Naive thymus-derived CD4-positive, alpha-beta T cell (primary cell): ENCODE measurements at regions of chr3 and their contacts with region 1.

Region 1: DNA sequence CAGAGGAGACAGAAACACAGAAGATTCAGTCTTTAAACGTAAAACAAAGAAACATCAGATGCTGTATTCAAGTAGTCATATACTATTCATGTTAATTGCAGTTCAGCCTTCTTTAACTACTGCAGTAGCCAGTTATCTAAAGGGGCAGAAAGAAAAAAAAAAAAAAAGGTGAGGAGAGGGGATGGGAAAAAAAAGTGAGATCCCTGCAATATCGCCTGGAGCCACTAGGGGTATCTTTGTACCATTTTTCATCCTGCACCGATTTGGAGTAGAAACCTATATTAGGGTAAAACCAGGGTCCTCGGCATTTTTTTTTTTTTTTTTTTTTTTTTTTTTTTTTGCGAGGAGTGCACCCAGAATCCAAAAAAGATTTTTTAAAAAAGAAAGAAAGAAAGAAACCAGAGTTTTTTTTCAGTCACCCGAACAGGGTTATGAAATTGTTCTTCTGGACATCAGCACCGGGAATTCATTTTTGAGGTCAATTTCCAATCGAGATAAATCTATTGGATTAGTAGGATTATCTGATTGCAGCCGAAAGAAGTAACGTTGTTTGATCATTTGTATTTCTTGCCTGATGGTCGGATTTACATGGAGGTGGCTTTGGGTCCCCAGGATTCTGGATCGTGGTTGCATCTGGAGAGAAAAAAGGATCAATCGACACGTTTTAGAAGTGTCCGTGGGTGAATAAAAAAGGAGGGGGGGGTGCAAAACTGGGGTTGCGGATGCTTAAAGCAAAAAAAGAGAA is 186.7 kb downstream of the NLGN1 start:
- DNase-seq: no peak
- ATAC-seq: no peak
- H3K4me3 ChIP-seq: no peak overlapping the region
- H3K4me3 Mint-ChIP-seq: peak overlapping the region in 4 of 10 donors; percentile 8 to 48 (median 20)
- H3K27ac ChIP-seq: no peak overlapping the region
- H3K27ac Mint-ChIP-seq: no peak overlapping the region
- H3K4me1 ChIP-seq: no peaks in the 10 kb centered on the region
- H3K4me1 Mint-ChIP-seq: peaks cover 6 to 14% (median 9%) of the 10 kb centered on the region in 7 donors
- H3K27me3 ChIP-seq: no peaks in the 10 kb centered on the region
- H3K27me3 Mint-ChIP-seq: peaks cover 29 to 31% (median 31%) of the 10 kb centered on the region in 5 donors

Region 2: DNA sequence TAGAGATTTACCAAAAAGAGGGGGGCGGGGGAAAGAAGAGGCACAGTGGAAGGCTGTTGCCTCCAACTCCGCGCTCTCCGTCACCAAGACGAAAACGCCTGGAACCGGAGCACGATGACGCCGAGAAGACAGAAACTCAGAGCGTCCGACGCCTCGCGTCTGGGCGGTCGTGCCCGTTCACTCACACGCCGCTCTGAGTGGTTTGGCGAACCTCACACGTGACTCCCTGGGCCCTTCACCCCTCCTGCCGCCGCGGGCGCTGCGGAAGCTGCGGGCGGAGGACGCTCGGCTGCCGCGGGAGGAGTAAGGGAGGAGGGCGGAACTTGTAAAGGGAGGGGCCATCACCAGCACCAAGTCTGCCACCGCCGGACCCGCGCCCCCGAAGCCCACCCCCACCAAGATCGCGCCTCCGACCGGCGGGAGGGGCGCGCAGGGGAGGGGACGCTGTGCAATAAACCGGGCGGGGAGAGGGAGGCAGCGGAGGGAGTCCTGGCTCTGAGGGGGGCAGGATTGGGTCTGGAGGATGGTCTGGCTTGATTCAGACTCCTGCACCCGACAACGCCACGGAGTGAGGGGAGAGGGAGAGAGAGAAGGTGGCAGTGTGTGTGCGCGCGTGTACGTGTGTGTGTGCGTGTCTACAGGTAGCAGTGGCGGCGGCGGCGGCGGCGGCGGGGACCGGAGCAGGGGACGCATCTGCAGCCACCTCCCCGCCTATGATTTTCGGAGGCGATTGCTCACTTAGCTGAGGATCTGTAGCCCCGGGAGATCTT is 188.7 kb before region 1 on chr3:
- CTCF ChIA-PET with region 1: no interaction called
- POLR2A ChIA-PET with region 1: no interaction called
- intact Hi-C with region 1: loop called in 1 of 2 experiments (anchors 10 kb)
- DNase-seq: peak in 8 of 9 donors; percentile 10 to 57 (median 30)
- ATAC-seq: peak; percentile 86
- H3K4me3 ChIP-seq: peak overlapping the region; percentile 38
- H3K4me3 Mint-ChIP-seq: peak overlapping the region; percentile 71 to 86 (median 81)
- H3K27ac ChIP-seq: no peak overlapping the region
- H3K27ac Mint-ChIP-seq: peak overlapping the region in 3 of 9 donors; percentile 14 to 81 (median 66)
- H3K4me1 ChIP-seq: peaks cover 0 to 3% of the 10 kb centered on the region in 2 donors
- H3K4me1 Mint-ChIP-seq: peaks cover 23 to 39% (median 31%) of the 10 kb centered on the region in 7 donors
- H3K27me3 ChIP-seq: peaks cover 3 to 9% of the 10 kb centered on the region in 2 donors
- H3K27me3 Mint-ChIP-seq: peaks cover 65 to 73% (median 68%) of the 10 kb centered on the region in 5 donors